Ascending aorta (tissue), 2 donors: ENCODE measurements at regions of chr1 and their contacts with region 1.

Region 1: GRCh38 chr1:45011837-45012638 is at the start of gene UROD:
- DNase-seq: peak; percentile 77 to 95
- H3K4me3 ChIP-seq: peak within 1 kb of the TSS; percentile 70 to 86
- H3K27ac ChIP-seq: peak within 1 kb of the TSS; percentile 65 to 81
- H3K4me1 ChIP-seq: peaks cover 20 to 31% of the 10 kb centered on the region in 2 donors
- H3K27me3 ChIP-seq: no peaks in the 10 kb centered on the region
- CTCF ChIP-seq: no peak
- total RNA-seq, gene UROD: 150 TPM

Region 2: GRCh38 chr1:44730741-44731512 is 281.1 kb before region 1 on chr1 and contains the start of gene RNU5D-1:
- intact Hi-C with region 1: loop called (anchors 5 kb)
- DNase-seq: peak; percentile 81 to 98
- H3K4me3 ChIP-seq: peak within 1 kb of the TSS in 1 of 2 donors; percentile 31
- H3K27ac ChIP-seq: peak within 1 kb of the TSS; percentile 84 to 92
- H3K4me1 ChIP-seq: peaks cover 5 to 15% of the 10 kb centered on the region in 2 donors
- H3K27me3 ChIP-seq: no peaks in the 10 kb centered on the region
- CTCF ChIP-seq: peak; percentile 70 to 76 (median 72)
- total RNA-seq, gene RNU5D-1: not detected

Region 3: GRCh38 chr1:44786138-44786840 is 225.7 kb before region 1 on chr1:
- intact Hi-C with region 1: loop called (anchors 5 kb)
- DNase-seq: peak in 1 of 2 donors; percentile 84
- H3K4me3 ChIP-seq: peak overlapping the region; percentile 55 to 79
- H3K27ac ChIP-seq: peak overlapping the region; percentile 66 to 85
- H3K4me1 ChIP-seq: peaks cover 8 to 17% of the 10 kb centered on the region in 2 donors
- H3K27me3 ChIP-seq: no peaks in the 10 kb centered on the region
- CTCF ChIP-seq: peak; percentile 99 to 100 (median 99)

Region 4: DNA sequence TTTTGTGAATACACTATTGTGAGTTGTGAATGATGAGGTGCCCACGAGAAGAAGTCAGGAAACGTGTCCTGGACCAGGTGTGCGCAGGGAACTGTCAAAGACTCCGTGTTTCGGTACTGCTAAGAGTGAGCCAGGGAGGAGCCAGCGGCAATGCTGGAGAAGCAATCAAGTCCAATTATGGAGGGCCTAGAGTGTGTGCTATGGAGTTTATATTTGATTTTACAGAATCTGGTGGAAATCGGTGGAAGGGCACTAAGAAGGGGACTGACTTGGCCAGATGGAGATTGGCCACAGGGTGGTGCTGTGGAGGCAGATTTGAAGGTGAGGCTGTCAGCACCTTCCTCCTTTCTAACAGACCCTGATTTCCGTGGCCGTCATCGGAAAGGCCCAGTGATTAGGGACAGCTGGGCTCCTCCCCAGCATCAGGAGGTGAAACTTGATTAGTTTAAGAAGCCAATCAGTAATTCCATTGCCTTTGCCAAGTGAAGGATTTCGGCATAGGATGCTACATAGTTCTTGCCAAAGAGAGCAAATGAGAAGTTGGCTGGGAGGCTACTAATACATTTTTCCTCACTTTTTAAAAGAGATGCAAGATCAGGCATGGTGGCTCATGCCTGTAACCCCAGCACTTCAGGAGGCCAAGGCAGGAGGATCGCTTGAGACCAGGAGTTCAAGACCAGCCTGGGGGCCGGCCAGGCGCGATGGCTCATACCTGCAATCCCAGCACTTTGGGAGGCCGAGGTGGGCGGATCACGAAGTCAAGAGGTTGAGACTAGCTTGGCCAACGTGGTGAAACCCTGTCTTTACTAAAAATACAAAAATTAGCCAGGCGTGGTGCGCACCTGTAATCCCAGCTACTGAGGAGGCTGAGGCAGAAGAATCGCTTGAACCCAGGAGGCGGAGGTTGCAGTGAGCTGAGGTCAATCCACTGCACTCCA is 176.0 kb before region 1 on chr1:
- intact Hi-C with region 1: loop called (anchors 5 kb)
- DNase-seq: peak in 1 of 2 donors; percentile 91
- H3K4me3 ChIP-seq: no peak overlapping the region
- H3K27ac ChIP-seq: no peak overlapping the region
- H3K4me1 ChIP-seq: no peaks in the 10 kb centered on the region
- H3K27me3 ChIP-seq: no peaks in the 10 kb centered on the region
- CTCF ChIP-seq: peak; percentile 73 to 80 (median 75)

Region 5: DNA sequence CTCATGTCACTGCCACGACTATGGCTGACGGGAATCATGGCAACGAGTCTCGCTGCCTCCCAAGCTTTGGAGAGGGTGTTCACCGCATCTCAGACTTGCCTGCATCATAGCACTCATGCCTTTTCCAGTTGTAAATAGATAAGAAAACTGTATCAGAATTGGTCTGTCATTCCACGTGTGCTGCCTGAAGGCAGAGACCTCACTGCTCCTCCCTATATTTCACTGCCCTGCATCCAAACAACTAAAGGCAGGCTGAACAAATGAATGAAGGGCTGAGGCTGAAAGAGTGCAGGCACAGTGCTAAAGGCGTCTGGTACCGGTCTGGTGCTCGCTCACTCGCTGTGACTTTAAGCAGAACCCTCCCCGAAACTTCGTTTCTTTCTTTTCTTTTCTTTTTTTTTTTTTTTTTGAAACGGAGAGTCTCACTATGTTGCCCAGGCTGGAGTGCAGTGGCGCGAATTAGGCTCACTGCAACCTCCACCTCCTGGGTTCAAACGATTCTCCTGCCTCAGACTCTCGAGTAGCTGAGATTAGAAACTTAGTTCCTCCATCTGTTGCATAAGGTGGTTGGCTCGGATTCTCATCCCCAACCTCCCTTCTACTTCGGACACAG is 26.2 kb before region 1 on chr1:
- intact Hi-C with region 1: loop called (anchors 2 kb)
- DNase-seq: no peak
- H3K4me3 ChIP-seq: peak overlapping the region; percentile 81 to 90
- H3K27ac ChIP-seq: peak overlapping the region; percentile 50 to 54
- H3K4me1 ChIP-seq: peaks cover 5 to 25% of the 10 kb centered on the region in 2 donors
- H3K27me3 ChIP-seq: no peaks in the 10 kb centered on the region
- CTCF ChIP-seq: no peak

Region 6: GRCh38 chr1:45339789-45340570 is 327.9 kb after region 1 on chr1 and contains the starts of genes MUTYH and TOE1:
- intact Hi-C with region 1: loop called (anchors 1 kb)
- DNase-seq: peak; percentile 64 to 95
- H3K4me3 ChIP-seq: peak within 1 kb of the TSS; percentile 84 to 87
- H3K27ac ChIP-seq: peak within 1 kb of the TSS; percentile 98
- H3K4me1 ChIP-seq: peaks cover 11 to 19% of the 10 kb centered on the region in 2 donors
- H3K27me3 ChIP-seq: no peaks in the 10 kb centered on the region
- CTCF ChIP-seq: peak in 1 of 3 experiments; percentile 9
- total RNA-seq, gene MUTYH: 1.8 TPM
- total RNA-seq, gene TOE1: 6.9 TPM

Region 7: GRCh38 chr1:45569962-45570581 is 558.0 kb after region 1 on chr1:
- intact Hi-C with region 1: loop called (anchors 5 kb)
- DNase-seq: peak in 1 of 2 donors; percentile 81
- H3K4me3 ChIP-seq: no peak overlapping the region
- H3K27ac ChIP-seq: peak overlapping the region; percentile 8 to 35
- H3K4me1 ChIP-seq: no peaks in the 10 kb centered on the region
- H3K27me3 ChIP-seq: no peaks in the 10 kb centered on the region
- CTCF ChIP-seq: peak; percentile 95 to 96 (median 96)